ENCODE measurements at regions of chr17 and their contacts with region 1.

Region 1: DNA sequence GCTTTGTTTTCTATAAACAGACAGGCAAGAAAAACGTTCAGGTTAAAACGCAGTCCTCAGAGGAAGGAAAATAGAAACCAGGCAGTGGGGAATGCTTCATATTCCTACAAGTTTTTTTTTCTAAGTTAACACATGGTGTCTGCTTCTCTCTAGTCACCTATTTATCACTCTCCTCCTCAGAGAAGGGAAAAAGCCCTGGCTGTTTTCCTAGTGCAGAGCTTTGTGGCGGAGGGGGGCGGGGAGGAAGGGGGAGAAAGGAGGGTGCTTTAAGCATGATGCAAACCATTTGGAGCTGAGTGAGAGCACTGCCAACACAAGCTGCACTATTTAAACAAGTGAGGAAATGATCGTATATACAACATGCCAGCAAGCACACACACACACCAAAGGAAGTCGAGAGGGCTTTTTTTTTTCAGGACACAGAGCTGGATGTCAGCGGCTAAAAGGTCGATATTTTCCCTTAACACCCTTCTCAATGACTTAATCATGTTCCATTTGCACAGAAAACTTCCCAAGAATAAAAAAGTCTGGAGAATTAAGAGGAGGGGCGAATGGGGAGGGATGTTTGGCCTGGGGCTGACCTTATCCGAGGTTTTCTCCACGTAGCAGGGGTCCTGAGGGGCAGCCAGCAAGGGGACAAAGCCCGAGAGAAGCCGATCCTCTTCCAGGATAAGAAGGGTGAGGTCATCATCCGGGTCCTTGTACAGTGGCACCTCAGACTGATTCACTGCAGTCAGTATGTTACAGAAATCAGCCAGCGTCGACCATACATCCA is 117.4 kb downstream of the HIC1 start:
- DNase-seq: peak; percentile 84

Region 2: GRCh38 chr17:2094891-2095535 is 77.3 kb before region 1 on chr17:
- intact Hi-C with region 1: loop called (anchors 5 kb)
- DNase-seq: peak; percentile 82

Region 3: GRCh38 chr17:2122641-2123302 is 49.5 kb before region 1 on chr17:
- intact Hi-C with region 1: loop called (anchors 5 kb)
- DNase-seq: peak; percentile 85

Region 4: DNA sequence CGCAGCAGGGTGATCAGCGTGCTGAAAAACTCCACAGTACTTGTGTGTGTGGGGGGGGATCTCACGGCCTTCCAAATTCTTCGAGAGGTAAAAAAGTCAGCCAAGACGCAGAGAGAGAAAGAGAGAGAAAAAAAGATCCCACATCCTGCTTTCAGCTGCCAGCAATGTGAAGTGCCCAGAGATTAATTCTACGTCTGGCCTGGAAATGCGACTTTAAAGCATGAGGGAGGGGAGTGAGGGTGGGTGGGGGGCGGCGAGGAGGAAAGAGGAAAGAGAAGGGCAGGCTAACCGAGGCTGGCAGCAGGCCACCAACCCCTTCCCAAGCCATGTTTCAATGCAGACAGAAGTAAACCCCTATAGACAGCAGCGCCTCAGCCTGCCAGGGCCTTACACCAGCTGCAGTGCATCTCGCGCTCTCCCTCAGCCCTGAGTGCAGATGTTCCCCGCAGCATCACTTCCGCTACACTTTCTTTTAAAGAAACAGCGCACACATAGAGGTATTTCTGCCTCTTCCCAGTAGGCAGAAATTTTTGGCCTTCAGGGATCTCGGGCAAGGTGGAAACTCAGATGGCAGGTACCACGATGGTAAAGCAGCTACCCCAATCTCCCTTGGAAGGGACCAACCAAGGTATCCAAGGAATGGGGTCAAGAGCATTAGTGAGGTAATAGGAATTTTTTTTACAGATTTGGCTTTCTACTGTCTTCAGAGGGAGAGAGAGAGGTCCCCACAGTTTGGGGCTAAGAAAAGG is 43.5 kb after region 1 on chr17:
- intact Hi-C with region 1: loop called (anchors 1 kb)
- DNase-seq: peak; percentile 87

Region 5: DNA sequence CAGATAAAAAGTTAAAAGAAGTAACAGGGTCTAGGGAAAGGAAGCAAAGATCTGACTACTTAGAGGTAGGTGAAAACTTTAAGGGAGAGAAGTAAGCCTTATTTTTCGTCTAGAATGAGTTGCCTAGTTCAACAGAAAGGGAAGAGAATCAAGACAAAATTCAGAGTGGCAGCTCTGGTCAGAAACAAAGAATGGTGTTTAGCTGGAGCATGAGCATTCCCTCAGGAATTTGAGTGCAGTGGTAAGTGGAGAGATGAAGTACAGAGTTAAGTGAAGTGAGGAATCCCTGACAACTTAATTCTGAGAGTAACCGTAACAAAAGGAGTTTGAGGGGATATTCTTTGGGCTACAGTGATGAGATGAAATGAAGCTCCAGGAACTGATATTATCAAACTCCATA is 119.8 kb after region 1 on chr17:
- intact Hi-C with region 1: no loop called
- DNase-seq: no peak

Region 6: DNA sequence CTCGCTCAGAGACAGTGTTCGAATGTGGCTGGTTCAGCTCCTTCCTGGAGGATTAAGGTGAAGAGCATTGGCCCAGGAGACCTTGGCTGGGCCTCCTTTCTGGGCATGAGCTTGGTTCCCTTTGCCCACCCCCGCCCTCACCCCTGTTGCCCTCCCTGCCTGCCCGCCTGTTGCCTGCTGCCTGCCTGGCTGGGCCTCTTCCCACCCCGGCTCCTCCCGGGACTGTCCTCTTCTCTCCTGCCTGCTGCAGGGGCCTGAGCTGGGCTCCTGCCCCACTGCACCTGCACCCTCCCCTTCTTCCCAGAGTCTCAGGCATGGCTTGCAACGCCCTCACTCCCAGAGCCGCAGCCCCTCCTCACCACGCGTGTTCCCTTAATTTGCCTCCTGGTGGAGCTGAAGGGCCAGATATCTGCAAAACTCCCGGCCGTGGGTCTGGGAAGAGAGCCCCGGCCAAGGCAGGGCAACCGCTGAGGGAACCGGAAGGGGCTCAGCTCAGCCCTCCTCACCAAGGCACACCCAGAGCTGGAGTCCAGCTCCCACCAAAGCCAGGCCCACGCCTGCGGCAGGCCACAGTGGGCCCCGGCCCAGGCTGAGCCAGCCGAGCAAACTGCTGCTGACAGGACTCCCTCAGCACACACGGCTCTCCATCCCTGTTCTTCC is 197.4 kb after region 1 on chr17:
- intact Hi-C with region 1: no loop called
- DNase-seq: no peak